ENCODE measurements at regions of chr1 and their contacts with region 1.

Region 1: DNA sequence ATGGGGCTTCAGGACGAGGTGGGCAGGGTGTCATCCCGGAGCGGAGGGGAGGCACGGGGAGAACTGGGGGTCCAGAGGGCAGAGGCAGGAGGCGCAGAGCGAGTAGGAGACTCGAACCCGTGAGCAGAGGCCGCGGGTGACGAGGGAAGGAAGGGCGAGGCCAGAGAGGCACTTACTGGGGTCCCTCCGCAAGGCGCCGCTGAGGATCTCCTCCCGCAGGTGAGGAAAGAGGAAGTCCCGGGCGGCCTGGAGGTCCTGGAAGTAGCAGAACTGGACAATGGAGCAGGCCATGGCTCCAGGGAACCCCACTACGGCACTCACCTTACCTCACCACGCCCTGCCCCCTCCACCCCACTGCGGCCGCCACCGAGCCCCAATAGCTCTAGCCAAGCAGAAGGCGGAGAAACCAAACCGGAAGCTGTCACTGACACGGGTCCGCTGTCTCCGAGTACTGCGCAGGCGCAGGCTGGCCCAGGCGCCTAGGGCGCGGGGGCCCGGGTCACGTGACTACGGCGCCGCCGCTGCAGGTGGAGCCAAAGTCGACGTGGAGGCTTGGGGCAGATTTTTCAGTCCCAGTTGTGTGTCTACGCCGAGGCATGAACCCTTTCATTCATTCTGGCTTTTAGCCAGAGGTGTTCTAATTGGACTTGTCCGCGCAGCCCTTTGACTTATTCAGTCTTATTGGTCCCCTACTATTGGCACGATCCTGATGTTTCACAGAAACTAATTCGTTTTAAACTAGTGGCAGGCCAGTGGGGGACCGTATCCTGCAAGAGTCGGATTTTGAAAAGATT is at the start of gene RAB3GAP2:
- DNase-seq: peak; percentile 97
- H3K4me3 Mint-ChIP-seq: no peak within 1 kb of the TSS
- H3K27ac Mint-ChIP-seq: no peak within 1 kb of the TSS
- H3K4me1 Mint-ChIP-seq: peaks cover 15% of the 10 kb centered on the region
- H3K27me3 Mint-ChIP-seq: peaks cover 9% of the 10 kb centered on the region
- total RNA-seq, gene RAB3GAP2: 51.4 and 56.8 TPM in 2 replicates

Region 2: DNA sequence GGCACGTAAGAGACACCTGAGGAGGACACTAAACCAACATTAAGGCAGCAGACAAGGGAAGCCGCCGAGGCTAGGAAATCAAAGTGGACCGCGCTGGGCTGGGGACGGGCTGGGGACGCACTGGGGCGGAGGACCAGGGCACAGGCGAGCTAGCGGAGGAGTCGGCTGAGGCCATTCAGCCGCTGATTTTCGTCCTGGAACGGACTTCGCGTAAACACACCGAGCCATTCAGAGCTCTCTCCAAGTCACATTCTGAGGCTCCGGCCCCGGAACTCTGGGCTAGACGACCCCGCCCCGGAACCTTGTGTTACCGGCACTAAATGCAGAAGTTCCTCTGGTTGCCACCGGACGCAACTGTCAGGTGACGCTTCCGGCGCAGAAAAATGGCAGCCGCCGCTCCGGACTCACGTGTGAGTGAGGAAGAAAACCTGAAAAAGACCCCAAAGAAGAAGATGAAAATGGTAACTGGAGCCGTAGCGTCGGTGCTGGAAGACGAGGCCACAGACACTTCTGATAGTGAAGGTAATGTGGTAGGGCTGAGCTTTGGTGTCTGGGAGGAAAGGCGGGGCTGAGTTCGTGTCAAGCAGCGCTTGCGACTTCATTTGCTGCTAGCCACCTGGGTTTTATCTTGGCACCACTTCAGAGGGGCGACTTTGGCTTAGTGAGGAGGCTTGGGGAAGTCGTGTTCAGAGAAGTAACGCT is 1987.2 kb before region 1 on chr1 and contains the start of gene RRP15:
- intact Hi-C with region 1: loop called (anchors 5 kb)
- DNase-seq: peak; percentile 82
- H3K4me3 Mint-ChIP-seq: peak within 1 kb of the TSS; percentile 95
- H3K27ac Mint-ChIP-seq: peak within 1 kb of the TSS; percentile 98
- H3K4me1 Mint-ChIP-seq: peaks cover 37% of the 10 kb centered on the region
- H3K27me3 Mint-ChIP-seq: peaks cover 6% of the 10 kb centered on the region
- total RNA-seq, gene RRP15: 42.2 and 50.1 TPM in 2 replicates

Region 3: GRCh38 chr1:220046052-220046930 is 226.0 kb before region 1 on chr1 and contains the start of gene EPRS1:
- intact Hi-C with region 1: loop called (anchors 1 kb)
- DNase-seq: peak; percentile 95
- H3K4me3 Mint-ChIP-seq: peak within 1 kb of the TSS; percentile 96
- H3K27ac Mint-ChIP-seq: peak within 1 kb of the TSS; percentile 93
- H3K4me1 Mint-ChIP-seq: peaks cover 32% of the 10 kb centered on the region
- H3K27me3 Mint-ChIP-seq: no peaks in the 10 kb centered on the region
- total RNA-seq, gene EPRS1: 176 and 188 TPM in 2 replicates

Region 4: GRCh38 chr1:220219865-220220698 is 52.2 kb before region 1 on chr1:
- intact Hi-C with region 1: loop called (anchors 10 kb)
- DNase-seq: no peak
- H3K4me3 Mint-ChIP-seq: no peak overlapping the region
- H3K27ac Mint-ChIP-seq: no peak overlapping the region
- H3K4me1 Mint-ChIP-seq: peaks cover 7% of the 10 kb centered on the region
- H3K27me3 Mint-ChIP-seq: peaks cover 1% of the 10 kb centered on the region

Region 5: DNA sequence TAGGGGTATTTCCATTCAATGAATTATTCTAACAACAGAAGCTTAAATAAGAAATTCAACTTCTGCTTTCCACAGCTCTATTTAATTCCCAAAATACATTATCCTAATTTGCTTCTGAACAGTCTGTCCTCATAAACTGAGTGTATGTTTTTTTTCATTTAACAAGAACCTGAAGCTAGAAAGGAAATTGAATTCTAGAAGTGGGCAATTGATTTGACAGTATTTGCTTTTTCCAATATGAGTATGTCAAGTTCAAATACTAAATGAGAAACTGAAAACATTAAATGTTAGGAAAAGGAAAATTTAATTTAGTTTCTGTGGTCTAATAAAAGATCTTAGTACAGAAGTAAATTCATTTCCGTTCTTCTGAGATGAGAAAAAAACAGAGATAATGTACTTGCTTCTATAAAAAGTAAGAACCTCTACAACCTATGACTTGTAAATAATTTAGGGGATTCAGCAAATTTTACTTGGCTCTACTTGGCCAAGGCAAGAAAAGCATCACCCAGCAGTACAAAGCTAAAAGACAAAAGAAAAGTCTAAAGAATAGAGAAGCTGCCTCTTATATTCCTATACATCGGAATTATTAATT is 31.1 kb before region 1 on chr1:
- intact Hi-C with region 1: loop called (anchors 1 kb)
- DNase-seq: no peak
- H3K4me3 Mint-ChIP-seq: no peak overlapping the region
- H3K27ac Mint-ChIP-seq: peak overlapping the region; percentile 21
- H3K4me1 Mint-ChIP-seq: peaks cover 14% of the 10 kb centered on the region
- H3K27me3 Mint-ChIP-seq: no peaks in the 10 kb centered on the region

Region 6: GRCh38 chr1:220315070-220315839 is 43.0 kb after region 1 on chr1:
- intact Hi-C with region 1: no loop called
- DNase-seq: no peak
- H3K4me3 Mint-ChIP-seq: no peak overlapping the region
- H3K27ac Mint-ChIP-seq: no peak overlapping the region
- H3K4me1 Mint-ChIP-seq: no peaks in the 10 kb centered on the region
- H3K27me3 Mint-ChIP-seq: peaks cover 12% of the 10 kb centered on the region

Region 7: GRCh38 chr1:220594356-220594755 is 322.1 kb after region 1 on chr1:
- intact Hi-C with region 1: no loop called
- DNase-seq: no peak
- H3K4me3 Mint-ChIP-seq: no peak overlapping the region
- H3K27ac Mint-ChIP-seq: no peak overlapping the region
- H3K4me1 Mint-ChIP-seq: no peaks in the 10 kb centered on the region
- H3K27me3 Mint-ChIP-seq: peaks cover 2% of the 10 kb centered on the region